Sigmoid colon (tissue), 7 donors: ENCODE measurements at regions of chr10 and their contacts with region 1.

Region 1: DNA sequence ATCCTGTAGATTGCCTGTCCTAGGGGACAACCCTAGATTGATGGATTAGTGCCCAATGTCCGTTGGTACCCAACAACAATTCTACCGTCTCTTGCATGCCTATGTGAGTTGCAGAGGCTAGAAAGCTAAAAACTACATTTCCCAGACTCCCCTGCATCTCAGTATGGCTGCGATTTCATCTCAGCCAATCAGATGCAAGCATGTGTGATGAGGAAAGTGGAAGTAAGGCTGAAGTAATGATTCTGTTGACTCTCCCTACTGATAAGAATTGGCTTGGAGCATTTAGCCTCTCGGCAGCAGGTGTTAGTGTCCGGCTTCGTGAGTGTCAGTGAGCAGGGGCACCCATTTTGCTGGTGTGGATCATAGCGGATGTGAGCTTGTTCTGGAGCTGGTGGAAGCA is 171.9 kb downstream of the FGFR2 start:
- DNase-seq: no peak
- H3K4me3 ChIP-seq: no peak overlapping the region
- H3K27ac ChIP-seq: peak overlapping the region; percentile 38 to 82 (median 71)
- H3K4me1 ChIP-seq: peaks cover 0 to 41% (median 30%) of the 10 kb centered on the region in 4 donors
- H3K27me3 ChIP-seq: no peaks in the 10 kb centered on the region
- CTCF ChIP-seq: no peak
- EP300 ChIP-seq: no peak
- POLR2A ChIP-seq: no peak

Region 2: DNA sequence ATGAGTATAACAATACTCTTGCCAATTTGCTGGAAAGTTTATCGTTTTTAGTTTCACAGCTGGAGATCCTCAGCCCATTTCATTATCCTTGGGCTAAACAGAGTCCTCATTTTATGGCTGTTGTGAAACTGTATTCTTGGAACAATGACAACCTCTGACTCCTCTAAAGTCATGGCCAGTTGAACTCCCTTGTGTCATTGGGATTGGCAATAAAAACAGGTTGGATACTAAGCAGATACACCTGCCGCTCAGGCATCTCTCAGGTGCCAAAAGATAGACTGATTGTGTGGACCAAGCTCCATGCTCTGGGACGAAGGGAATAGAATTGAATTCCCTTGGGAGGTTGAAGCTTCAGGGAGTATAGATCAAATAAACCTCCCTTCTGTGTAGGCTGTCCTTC is 392.9 kb before region 1 on chr10:
- intact Hi-C with region 1: loop called (anchors 2 kb)
- DNase-seq: no peak
- H3K4me3 ChIP-seq: no peak overlapping the region
- H3K27ac ChIP-seq: peak overlapping the region in 3 of 4 donors; percentile 54 to 81 (median 80)
- H3K4me1 ChIP-seq: peaks cover 0 to 49% (median 36%) of the 10 kb centered on the region in 4 donors
- H3K27me3 ChIP-seq: no peaks in the 10 kb centered on the region
- CTCF ChIP-seq: no peak
- EP300 ChIP-seq: peak; percentile 67 to 91 (median 86)
- POLR2A ChIP-seq: no peak

Region 3: DNA sequence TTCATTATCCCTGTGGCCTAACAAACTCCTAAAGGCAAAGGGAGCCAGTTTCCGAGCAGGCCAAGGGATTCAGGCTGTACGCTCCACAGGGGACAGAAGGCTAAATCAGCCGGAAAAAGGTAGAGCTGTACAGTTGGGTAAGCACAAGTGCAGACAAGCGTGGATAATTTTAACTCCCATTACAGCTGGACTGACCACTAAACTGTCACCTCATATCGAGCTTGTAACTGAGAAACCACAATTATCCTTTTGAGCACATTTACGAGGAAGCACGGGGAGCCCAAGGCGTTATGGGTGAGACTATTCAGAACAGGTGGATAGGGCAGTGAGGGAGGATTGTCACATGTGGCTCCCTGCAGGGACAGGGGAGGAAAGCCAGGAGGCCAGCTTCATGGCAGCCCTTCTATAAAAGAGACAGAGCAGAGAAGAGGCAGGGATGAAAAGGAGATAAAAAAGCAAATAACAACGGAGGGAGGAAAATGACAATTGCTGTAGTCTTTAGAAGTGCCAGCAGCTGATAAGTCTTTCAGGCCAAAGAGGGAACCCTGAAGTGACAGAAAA is 116.1 kb before region 1 on chr10:
- intact Hi-C with region 1: loop called (anchors 5 kb)
- DNase-seq: no peak
- H3K4me3 ChIP-seq: no peak overlapping the region
- H3K27ac ChIP-seq: peak overlapping the region in 3 of 4 donors; percentile 54 to 82 (median 60)
- H3K4me1 ChIP-seq: peaks cover 0 to 60% (median 16%) of the 10 kb centered on the region in 4 donors
- H3K27me3 ChIP-seq: no peaks in the 10 kb centered on the region
- CTCF ChIP-seq: no peak
- EP300 ChIP-seq: no peak
- POLR2A ChIP-seq: no peak

Region 4: DNA sequence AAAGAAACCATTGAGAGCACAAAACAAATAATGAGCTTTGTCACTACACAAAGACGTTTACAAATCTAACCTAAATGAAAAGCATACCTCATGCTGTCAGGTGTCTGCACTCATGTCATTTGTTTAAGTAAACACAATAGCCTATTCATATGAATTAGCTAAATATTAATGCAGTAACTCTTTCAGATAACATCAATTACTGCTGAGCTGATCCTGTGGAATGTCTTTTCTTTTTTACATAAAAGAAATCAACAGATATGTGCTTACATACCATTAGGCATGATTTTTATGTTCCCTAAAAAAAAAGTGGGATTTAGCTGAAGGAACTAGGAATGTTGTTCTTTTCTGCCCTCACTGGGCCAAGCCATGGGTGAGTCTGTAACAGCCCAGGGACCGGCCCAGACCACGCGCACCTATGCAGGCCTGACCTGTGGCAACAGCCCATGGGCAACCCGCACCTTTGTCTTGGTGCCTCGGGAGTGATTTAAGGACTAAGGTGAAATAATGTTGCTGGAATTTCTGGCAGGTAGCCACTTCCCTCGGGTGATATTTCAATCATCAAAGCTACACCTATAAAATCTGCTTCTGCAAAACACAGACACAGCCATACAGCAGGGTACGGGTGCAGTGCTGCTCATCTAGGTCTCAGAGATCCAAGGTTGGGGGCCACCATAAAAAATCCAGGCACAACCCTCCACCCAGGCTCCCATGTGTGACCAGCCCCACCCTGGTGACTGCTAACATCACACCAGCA is 127.4 kb after region 1 on chr10:
- intact Hi-C with region 1: no loop called
- DNase-seq: no peak
- H3K4me3 ChIP-seq: no peak overlapping the region
- H3K27ac ChIP-seq: peak overlapping the region in 2 of 4 donors; percentile 28 to 40
- H3K4me1 ChIP-seq: peaks cover 0 to 23% (median 17%) of the 10 kb centered on the region in 4 donors
- H3K27me3 ChIP-seq: no peaks in the 10 kb centered on the region
- CTCF ChIP-seq: no peak
- EP300 ChIP-seq: no peak
- POLR2A ChIP-seq: no peak